ENCODE measurements at regions of chr19 and their contacts with region 1.

Region 1: GRCh38 chr19:55632463-55632834 is 8.1 kb upstream of the ZNF784 start:
- DNase-seq: peak; percentile 72 to 95 (median 89)
- ATAC-seq: peak; percentile 46
- H3K4me3 ChIP-seq: no peak overlapping the region
- H3K4me3 Mint-ChIP-seq: peak overlapping the region; percentile 23
- H3K27ac ChIP-seq: no peak overlapping the region
- H3K27ac Mint-ChIP-seq: peak overlapping the region; percentile 63
- H3K4me1 ChIP-seq: peaks cover 31% of the 10 kb centered on the region
- H3K4me1 Mint-ChIP-seq: peaks cover 40% of the 10 kb centered on the region
- H3K27me3 ChIP-seq: no peaks in the 10 kb centered on the region
- H3K27me3 Mint-ChIP-seq: no peaks in the 10 kb centered on the region
- CTCF ChIP-seq: peak; percentile 45

Region 2: GRCh38 chr19:55467236-55468053 is 165.0 kb before region 1 on chr19:
- CTCF ChIA-PET with region 1: interaction called, 34 read pairs
- POLR2A ChIA-PET with region 1: interaction called, 3 read pairs
- intact Hi-C with region 1: loop called in 1 of 2 experiments (anchors 5 kb)
- DNase-seq: peak; percentile 38 to 83 (median 66)
- ATAC-seq: peak; percentile 95
- H3K4me3 ChIP-seq: no peak overlapping the region
- H3K4me3 Mint-ChIP-seq: no peak overlapping the region
- H3K27ac ChIP-seq: no peak overlapping the region
- H3K27ac Mint-ChIP-seq: no peak overlapping the region
- H3K4me1 ChIP-seq: peaks cover 3% of the 10 kb centered on the region
- H3K4me1 Mint-ChIP-seq: peaks cover 3% of the 10 kb centered on the region
- H3K27me3 ChIP-seq: no peaks in the 10 kb centered on the region
- H3K27me3 Mint-ChIP-seq: no peaks in the 10 kb centered on the region
- CTCF ChIP-seq: peak; percentile 92

Region 3: DNA sequence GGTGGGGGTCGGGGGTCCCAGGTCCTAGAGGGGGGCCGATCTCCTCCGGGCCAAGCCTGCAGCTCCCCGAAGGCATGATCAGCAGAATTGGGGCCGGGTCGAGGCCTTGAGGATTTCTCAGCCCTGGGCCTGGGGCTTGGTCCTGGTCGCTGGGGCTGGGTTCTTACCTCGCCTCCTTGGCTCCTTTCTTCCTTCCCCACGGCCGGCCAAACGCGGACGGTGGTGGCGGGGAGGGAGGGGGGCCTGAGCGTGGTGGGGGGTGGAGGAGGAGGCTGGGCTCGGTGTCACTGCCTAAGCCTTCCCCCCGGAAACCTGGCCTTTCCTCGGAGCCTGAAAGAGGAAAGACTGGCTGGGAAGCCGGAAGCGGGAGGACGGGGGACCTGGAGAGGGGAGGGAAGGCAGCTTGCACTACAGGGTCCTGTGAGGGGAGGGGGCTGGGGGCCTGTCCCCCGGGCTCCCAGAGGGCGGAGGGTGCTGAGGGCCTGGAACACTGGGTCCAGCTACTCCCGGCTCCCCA is 51.8 kb before region 1 on chr19 and contains the start of gene ZNF579:
- CTCF ChIA-PET with region 1: interaction called, 18 read pairs
- POLR2A ChIA-PET with region 1: no interaction called
- intact Hi-C with region 1: loop called (anchors 1 to 2 kb)
- DNase-seq: peak; percentile 39 to 86 (median 75)
- ATAC-seq: peak; percentile 71
- H3K4me3 ChIP-seq: peak within 1 kb of the TSS; percentile 70 to 90
- H3K4me3 Mint-ChIP-seq: peak within 1 kb of the TSS; percentile 91
- H3K27ac ChIP-seq: peak within 1 kb of the TSS; percentile 67 to 81
- H3K27ac Mint-ChIP-seq: peak within 1 kb of the TSS; percentile 93
- H3K4me1 ChIP-seq: peaks cover 20% of the 10 kb centered on the region
- H3K4me1 Mint-ChIP-seq: peaks cover 27% of the 10 kb centered on the region
- H3K27me3 ChIP-seq: no peaks in the 10 kb centered on the region
- H3K27me3 Mint-ChIP-seq: no peaks in the 10 kb centered on the region
- CTCF ChIP-seq: no peak
- total RNA-seq, gene ZNF579: 5.7 to 6.1 TPM

Region 4: GRCh38 chr19:55605207-55605636 is 27.2 kb before region 1 on chr19:
- CTCF ChIA-PET with region 1: interaction called, 46 read pairs
- POLR2A ChIA-PET with region 1: interaction called, 18 read pairs
- intact Hi-C with region 1: loop called in 1 of 2 experiments (anchors 1 kb)
- DNase-seq: peak; percentile 90 to 99 (median 98)
- ATAC-seq: peak; percentile 78
- H3K4me3 ChIP-seq: peak overlapping the region; percentile 60 to 80
- H3K4me3 Mint-ChIP-seq: peak overlapping the region; percentile 86
- H3K27ac ChIP-seq: peak overlapping the region; percentile 60 to 91
- H3K27ac Mint-ChIP-seq: peak overlapping the region; percentile 90
- H3K4me1 ChIP-seq: peaks cover 24% of the 10 kb centered on the region
- H3K4me1 Mint-ChIP-seq: peaks cover 60% of the 10 kb centered on the region
- H3K27me3 ChIP-seq: no peaks in the 10 kb centered on the region
- H3K27me3 Mint-ChIP-seq: no peaks in the 10 kb centered on the region
- CTCF ChIP-seq: no peak

Region 5: DNA sequence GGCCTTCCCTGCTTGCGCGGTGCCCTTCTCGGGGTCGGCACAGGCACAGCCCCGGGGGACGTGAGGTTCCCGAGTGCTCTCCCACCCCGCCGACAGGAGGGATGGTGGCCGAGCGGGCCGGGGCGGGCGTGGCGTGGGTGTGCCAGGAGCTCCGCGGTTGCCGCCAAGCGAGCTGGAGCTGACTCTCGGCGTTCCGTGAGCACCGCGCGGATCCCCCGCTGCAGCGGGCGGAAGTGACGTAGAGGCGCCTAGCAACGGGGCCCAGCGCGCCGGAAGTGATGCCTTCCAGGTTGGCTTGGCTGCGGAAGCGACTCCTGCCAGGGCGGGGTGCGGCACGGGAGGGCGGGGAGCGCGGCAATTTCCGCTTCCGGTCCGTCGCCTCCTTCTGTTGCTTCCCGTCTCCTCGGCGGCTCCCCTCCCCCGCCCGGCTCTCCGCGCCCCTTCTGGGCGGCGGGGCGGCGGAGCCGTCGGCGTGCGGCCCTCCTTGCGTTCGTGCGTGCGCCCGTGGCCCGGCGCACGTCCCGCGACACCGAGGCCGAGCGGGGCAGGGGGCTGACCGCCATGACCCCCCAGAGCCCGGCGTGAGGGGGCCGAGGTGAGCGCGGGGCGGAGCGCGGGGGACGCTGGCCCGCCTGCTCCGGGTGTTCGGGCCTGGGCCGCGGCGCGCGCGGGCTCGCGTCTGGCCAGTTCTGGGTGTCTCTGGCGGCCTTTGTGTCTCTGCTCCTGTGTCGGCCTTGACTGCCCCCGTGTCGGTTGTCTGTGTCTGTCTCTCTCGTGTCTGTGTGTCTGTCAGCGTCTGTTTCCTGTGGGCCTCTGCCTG is 42.6 kb after region 1 on chr19 and contains the start of gene EPN1:
- CTCF ChIA-PET with region 1: interaction called, 14 read pairs
- POLR2A ChIA-PET with region 1: no interaction called
- intact Hi-C with region 1: loop called (anchors 1 to 2 kb)
- DNase-seq: peak; percentile 96 to 99 (median 97)
- ATAC-seq: peak; percentile 91
- H3K4me3 ChIP-seq: peak within 1 kb of the TSS; percentile 80
- H3K4me3 Mint-ChIP-seq: peak within 1 kb of the TSS; percentile 93
- H3K27ac ChIP-seq: peak within 1 kb of the TSS; percentile 88 to 91
- H3K27ac Mint-ChIP-seq: peak within 1 kb of the TSS; percentile 97
- H3K4me1 ChIP-seq: peaks cover 51% of the 10 kb centered on the region
- H3K4me1 Mint-ChIP-seq: peaks cover 61% of the 10 kb centered on the region
- H3K27me3 ChIP-seq: no peaks in the 10 kb centered on the region
- H3K27me3 Mint-ChIP-seq: no peaks in the 10 kb centered on the region
- CTCF ChIP-seq: no peak
- total RNA-seq, gene EPN1: 41.1 to 45.2 TPM